Endothelial cell of umbilical vein (primary cell): ENCODE measurements at regions of chr4 and their contacts with region 1.

Region 1: GRCh38 chr4:107130157-107130556 is 94.0 kb upstream of the DKK2 start:
- DNase-seq: peak; percentile 92
- H3K4me3 ChIP-seq: no peak overlapping the region
- H3K27ac ChIP-seq: peak overlapping the region; percentile 34
- H3K4me1 ChIP-seq: peaks cover 31% of the 10 kb centered on the region
- H3K27me3 ChIP-seq: no peaks in the 10 kb centered on the region
- CTCF ChIP-seq: no peak
- POLR2A ChIP-seq: no peak

Region 2: GRCh38 chr4:107037199-107037584 is 93.0 kb before region 1 on chr4:
- CTCF ChIA-PET with region 1: no interaction called
- POLR2A ChIA-PET with region 1: no interaction called
- dilution Hi-C with region 1: no loop called
- intact Hi-C with region 1: no loop called
- DNase-seq: peak; percentile 43
- H3K4me3 ChIP-seq: peak overlapping the region in 1 of 3 experiments; percentile 84
- H3K27ac ChIP-seq: no peak overlapping the region
- H3K4me1 ChIP-seq: peaks cover 34% of the 10 kb centered on the region
- H3K27me3 ChIP-seq: peaks cover 17 to 19% of the 10 kb centered on the region in 2 experiments
- CTCF ChIP-seq: peak; percentile 65 to 77
- POLR2A ChIP-seq: no peak

Region 3: GRCh38 chr4:107147873-107148272 is 17.7 kb after region 1 on chr4:
- CTCF ChIA-PET with region 1: interaction called, 3 read pairs
- POLR2A ChIA-PET with region 1: no interaction called
- dilution Hi-C with region 1: no loop called
- intact Hi-C with region 1: loop called (anchors 2 kb)
- DNase-seq: no peak
- H3K4me3 ChIP-seq: no peak overlapping the region
- H3K27ac ChIP-seq: no peak overlapping the region
- H3K4me1 ChIP-seq: no peaks in the 10 kb centered on the region
- H3K27me3 ChIP-seq: no peaks in the 10 kb centered on the region
- CTCF ChIP-seq: no peak
- POLR2A ChIP-seq: no peak